A549 (cell line): ENCODE measurements at regions of chr4 and their contacts with region 1.

Region 1: DNA sequence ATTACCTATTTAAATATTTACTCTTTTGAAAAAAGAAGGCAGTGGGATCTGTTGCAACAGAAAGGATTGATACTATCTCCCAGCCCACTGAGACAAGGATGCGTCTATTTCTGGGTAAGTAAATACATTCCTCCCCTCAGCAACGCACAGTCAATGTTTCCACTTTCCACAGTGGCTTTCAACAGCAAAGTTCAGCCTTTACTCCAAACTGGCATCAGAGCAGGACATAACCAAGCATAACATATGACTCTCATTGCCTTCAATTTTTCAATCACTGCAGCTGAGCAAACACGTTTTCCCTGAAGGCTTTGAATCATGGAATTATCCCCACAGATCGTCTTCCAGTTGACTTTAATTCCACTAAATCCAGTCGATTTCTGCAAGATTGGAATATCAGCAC is 160.3 kb upstream of the FRG1 start:
- DNase-seq: no peak
- ATAC-seq: no peak
- H3K4me3 ChIP-seq: no peak overlapping the region
- H3K27ac ChIP-seq: no peak overlapping the region
- H3K4me1 ChIP-seq: no peaks in the 10 kb centered on the region
- CTCF ChIP-seq: no peak
- EP300 ChIP-seq: no peak
- POLR2A ChIP-seq: no peak
- RAD21 ChIP-seq: no peak

Region 2: DNA sequence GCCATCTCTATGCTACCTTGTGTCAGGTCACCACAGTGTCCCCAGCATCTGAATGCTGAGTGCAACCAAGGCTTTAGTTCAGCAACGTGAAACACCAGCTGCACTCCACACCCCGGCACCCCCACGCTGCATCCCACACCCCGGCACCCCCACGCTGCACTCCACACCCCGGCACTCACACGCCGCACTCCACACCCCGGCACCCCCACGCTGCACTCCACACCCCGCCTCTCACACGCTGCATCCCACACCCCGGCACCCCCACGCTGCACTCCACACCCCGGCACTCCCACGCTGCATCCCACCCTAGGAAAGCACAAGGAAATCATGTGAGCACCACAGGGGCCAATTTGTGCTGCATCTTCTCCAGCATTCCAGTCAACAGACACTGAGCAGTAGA is 39.5 kb before region 1 on chr4:
- CTCF ChIA-PET with region 1: no interaction called
- POLR2A ChIA-PET with region 1: no interaction called
- DNase-seq: no peak
- ATAC-seq: no peak
- H3K4me3 ChIP-seq: no peak overlapping the region
- H3K27ac ChIP-seq: no peak overlapping the region
- H3K4me1 ChIP-seq: no peaks in the 10 kb centered on the region
- CTCF ChIP-seq: no peak
- EP300 ChIP-seq: no peak
- POLR2A ChIP-seq: no peak
- RAD21 ChIP-seq: no peak

Region 3: GRCh38 chr4:189769131-189769530 is 11.3 kb before region 1 on chr4:
- CTCF ChIA-PET with region 1: no interaction called
- POLR2A ChIA-PET with region 1: no interaction called
- DNase-seq: no peak
- ATAC-seq: no peak
- H3K4me3 ChIP-seq: no peak overlapping the region
- H3K27ac ChIP-seq: no peak overlapping the region
- H3K4me1 ChIP-seq: no peaks in the 10 kb centered on the region
- CTCF ChIP-seq: no peak
- EP300 ChIP-seq: no peak
- POLR2A ChIP-seq: no peak
- RAD21 ChIP-seq: no peak

Region 4: GRCh38 chr4:189792924-189793618 is 12.7 kb after region 1 on chr4:
- CTCF ChIA-PET with region 1: interaction called, 11 read pairs
- POLR2A ChIA-PET with region 1: no interaction called
- DNase-seq: peak; percentile 33 to 65
- ATAC-seq: peak; percentile 89 to 93
- H3K4me3 ChIP-seq: no peak overlapping the region
- H3K27ac ChIP-seq: no peak overlapping the region
- H3K4me1 ChIP-seq: no peaks in the 10 kb centered on the region
- CTCF ChIP-seq: peak; percentile 64
- EP300 ChIP-seq: no peak
- POLR2A ChIP-seq: no peak
- RAD21 ChIP-seq: peak; percentile 79 to 87